Activated T-helper 1 cell treated with anti-CD3 and anti-CD28 coated beads, Interleukin-12 subunit alpha, Interleukin-12 subunit beta, Interleukin-2, Interleukin-4 antibody, amounts not matched to agents 30 ng/mL and 10 ng/mL and 1 ng/mL, durations not matched to agents 14 hours and 24 hours and 36 hours (primary cell): ENCODE measurements at regions of chr1 and their contacts with region 1.

Region 1: DNA sequence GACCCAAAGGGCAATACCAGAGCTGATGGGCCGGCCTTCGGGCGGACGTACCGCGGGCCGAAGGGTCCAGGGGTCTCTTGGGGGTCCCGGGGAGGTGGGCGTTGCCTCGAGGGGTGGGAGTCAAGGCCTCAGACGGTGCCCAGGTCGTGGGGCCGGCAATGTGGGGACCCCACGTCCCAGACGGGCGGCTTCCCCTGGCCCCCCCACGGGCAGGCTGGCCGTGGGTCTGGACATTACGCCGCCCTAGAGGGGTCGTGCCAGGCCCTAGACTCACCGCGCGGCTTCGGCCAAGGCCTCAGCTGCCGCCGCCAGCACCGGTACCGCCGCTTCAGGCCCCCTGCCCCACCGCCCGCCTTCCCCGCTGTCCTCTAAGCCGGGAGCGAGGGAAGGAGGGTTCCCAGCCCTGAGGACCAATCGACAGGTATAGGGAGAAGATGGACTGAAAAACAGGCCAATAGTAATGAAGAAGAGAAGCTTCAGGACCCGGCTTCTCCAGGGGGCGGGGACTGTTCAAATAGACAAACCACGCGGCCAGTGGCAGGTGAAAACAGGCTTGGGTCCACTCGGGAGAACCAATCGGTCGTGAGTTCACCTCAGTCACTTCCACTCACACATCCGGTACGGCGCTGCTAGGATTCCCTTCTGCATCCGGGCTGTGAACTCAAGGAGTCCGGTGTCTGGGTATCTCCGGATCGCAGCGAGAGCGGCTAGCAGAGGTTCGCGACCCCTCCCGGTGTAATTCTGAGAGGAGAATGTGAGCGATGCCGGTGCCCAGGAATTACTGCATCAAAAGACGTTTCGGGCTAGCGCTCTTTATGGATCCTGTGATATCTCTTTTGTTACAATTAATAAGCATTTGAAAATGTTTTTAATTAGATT is at the start of gene MTOR:
- DNase-seq: peak; percentile 97
- H3K4me3 Mint-ChIP-seq: peak within 1 kb of the TSS; percentile 97
- H3K27ac Mint-ChIP-seq: peak within 1 kb of the TSS; percentile 82
- H3K4me1 Mint-ChIP-seq: peaks cover 11% of the 10 kb centered on the region
- H3K27me3 Mint-ChIP-seq: peaks cover 3% of the 10 kb centered on the region
- total RNA-seq, gene MTOR: 48.7 and 49.4 TPM in 2 replicates

Region 2: DNA sequence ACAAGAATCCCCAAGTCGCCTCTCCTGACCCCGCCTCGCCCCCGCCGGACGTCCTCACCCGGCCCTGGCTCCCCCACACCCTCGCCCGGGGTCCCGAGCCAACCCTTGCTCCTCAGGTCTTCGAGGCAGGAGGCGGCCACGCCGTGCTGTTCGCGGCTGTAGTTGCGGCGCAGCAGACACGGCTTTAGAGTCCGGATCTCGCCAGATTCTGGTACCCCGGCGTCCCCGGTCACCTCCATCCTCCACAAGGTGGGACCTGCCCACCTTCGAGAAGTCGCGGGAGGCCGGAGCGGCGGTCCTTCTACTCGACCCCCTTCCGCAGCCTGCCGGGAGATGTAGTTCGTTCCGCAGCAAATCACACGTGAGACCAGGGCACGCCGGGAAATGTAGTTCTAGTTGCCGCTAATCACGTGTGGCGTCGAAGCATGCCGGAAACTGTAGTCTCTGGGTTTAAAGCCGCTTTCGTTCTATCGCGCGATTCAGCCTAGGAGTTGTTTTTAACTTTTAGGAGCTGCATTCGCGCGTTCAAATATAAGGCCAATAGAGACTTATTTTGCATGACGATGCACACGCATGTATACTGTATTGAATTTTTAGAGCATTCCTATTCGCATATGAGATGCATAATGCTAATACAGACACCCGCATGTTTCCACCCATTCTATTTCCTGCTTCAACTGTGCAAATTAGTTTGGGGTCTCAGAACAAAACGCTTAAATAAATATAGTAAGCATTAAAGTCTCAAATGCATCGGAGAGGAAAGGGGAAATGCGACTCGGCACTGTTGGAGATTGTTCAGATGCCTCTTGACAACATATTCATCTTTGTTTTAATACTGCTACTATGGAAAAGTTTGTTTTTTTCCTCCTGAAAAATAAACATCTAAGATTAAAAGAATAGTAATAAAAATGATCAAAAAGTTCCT is 789.9 kb before region 1 on chr1 and contains the start of gene DFFA:
- intact Hi-C with region 1: loop called (anchors 1 kb)
- DNase-seq: peak; percentile 90
- H3K4me3 Mint-ChIP-seq: peak within 1 kb of the TSS; percentile 89
- H3K27ac Mint-ChIP-seq: peak within 1 kb of the TSS; percentile 85
- H3K4me1 Mint-ChIP-seq: peaks cover 45% of the 10 kb centered on the region
- H3K27me3 Mint-ChIP-seq: no peaks in the 10 kb centered on the region
- total RNA-seq, gene DFFA: 54.7 and 60.1 TPM in 2 replicates

Region 3: DNA sequence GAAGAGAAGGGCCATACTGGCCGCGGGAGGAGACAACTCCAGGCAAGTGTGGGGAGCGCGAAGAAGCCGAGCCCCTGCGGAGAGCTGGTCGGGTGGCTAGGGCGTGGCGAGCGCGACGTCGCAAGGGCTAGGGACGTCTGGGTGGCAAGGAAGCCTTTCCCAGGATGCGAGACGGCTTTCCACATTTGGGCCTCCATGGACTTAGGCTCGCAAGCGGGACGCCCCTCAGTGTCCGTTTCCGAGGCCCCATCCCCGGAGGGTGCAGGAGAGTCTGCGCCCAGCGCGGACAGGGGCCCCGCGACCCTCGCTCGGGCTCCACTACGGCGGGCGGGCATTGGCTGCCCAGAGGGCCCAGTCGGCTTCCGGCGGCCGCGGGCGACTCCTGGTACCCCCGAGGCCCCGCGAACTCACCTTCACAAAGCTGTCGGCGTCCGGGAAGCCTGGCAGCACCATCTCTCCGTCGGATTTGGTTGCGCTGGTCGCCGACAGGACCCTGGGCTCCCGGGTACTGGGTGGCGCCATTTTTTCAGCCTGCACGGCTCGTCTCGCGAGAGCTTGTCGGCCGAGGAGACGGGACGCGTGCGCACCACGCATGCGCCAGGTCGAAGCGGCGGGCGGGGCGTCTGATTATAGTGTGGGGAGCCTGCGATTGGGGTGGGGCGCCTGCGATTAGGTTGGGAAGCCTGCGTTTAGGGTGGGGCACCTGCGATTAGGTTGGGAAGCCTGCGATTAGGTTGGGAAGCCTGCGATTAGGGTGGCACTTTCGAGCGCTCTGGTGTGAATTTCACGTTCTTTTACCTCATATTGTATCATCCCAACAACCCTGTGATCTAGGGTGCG is 162.9 kb before region 1 on chr1 and contains the start of gene EXOSC10:
- intact Hi-C with region 1: loop called (anchors 1 kb)
- DNase-seq: peak; percentile 96
- H3K4me3 Mint-ChIP-seq: peak within 1 kb of the TSS; percentile 96
- H3K27ac Mint-ChIP-seq: peak within 1 kb of the TSS; percentile 96
- H3K4me1 Mint-ChIP-seq: peaks cover 13% of the 10 kb centered on the region
- H3K27me3 Mint-ChIP-seq: no peaks in the 10 kb centered on the region
- total RNA-seq, gene EXOSC10: 93.5 and 103 TPM in 2 replicates

Region 4: DNA sequence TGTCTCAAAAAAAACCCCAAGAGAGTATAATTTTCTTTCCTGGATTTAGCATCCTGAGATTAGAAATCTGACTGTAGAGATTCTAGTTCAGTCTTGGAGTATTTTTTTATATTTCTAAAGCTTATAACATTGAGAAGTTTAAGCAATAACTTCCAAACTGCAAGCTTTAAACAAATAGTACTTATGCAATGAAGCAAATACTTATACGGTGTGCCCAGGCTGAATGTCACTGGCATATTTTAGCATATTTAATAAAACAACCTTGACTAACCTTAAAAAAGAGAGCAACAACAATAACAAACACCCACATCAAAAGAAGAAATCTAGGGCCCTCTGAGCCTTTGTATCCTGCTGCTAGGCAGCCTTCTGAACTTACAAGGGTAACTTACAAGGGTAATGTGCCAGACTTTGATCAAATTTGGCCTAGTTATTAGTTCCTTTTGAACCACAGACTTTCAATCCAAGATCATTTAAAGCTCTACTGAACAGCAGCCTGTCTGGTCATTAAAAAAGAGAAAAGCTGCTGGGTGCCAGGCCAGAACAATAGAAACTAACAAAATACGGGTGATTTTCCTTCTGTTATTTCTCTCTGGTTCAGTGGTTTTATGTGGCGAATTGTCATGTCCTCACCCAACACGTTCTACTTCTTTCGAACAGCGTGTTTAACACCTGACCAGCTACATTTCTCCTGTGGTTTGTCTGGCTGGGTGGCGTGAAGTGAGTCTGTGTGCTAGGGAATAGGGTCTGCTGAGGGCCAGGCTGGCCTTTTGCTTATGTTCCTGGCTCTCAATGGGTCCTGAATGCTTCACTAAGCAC is 16.3 kb before region 1 on chr1:
- intact Hi-C with region 1: loop called (anchors 1 kb)
- DNase-seq: no peak
- H3K4me3 Mint-ChIP-seq: no peak overlapping the region
- H3K27ac Mint-ChIP-seq: no peak overlapping the region
- H3K4me1 Mint-ChIP-seq: no peaks in the 10 kb centered on the region
- H3K27me3 Mint-ChIP-seq: no peaks in the 10 kb centered on the region

Region 5: GRCh38 chr1:11272832-11273594 is 10.6 kb after region 1 on chr1 and contains the start of gene UBIAD1:
- intact Hi-C with region 1: loop called (anchors 1 kb)
- DNase-seq: peak; percentile 75
- H3K4me3 Mint-ChIP-seq: peak within 1 kb of the TSS; percentile 98
- H3K27ac Mint-ChIP-seq: peak within 1 kb of the TSS; percentile 95
- H3K4me1 Mint-ChIP-seq: peaks cover 25% of the 10 kb centered on the region
- H3K27me3 Mint-ChIP-seq: peaks cover 2% of the 10 kb centered on the region
- total RNA-seq, gene UBIAD1: 30.5 and 33.1 TPM in 2 replicates

Region 6: DNA sequence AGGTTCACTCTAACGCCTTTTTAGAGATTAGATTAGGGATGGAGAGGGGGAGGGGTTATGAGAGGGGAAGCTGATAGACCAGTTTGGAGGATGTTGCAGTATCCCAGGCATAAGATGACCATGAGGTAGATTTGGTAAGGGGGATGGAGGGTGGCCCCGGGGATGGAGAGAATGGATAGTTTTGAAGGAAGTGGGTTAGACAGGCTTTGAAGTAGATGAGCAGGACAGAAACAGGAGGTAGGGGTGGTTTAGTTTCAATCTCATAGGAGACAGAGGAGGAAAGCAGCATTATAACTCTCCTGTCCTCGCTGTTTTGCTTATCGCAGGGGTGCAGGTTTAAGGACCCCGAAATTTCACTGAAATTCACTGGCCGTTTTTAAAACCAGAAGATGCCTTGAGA is 22.4 kb after region 1 on chr1:
- intact Hi-C with region 1: no loop called
- DNase-seq: no peak
- H3K4me3 Mint-ChIP-seq: peak overlapping the region; percentile 5
- H3K27ac Mint-ChIP-seq: peak overlapping the region; percentile 73
- H3K4me1 Mint-ChIP-seq: peaks cover 59% of the 10 kb centered on the region
- H3K27me3 Mint-ChIP-seq: no peaks in the 10 kb centered on the region

Region 7: DNA sequence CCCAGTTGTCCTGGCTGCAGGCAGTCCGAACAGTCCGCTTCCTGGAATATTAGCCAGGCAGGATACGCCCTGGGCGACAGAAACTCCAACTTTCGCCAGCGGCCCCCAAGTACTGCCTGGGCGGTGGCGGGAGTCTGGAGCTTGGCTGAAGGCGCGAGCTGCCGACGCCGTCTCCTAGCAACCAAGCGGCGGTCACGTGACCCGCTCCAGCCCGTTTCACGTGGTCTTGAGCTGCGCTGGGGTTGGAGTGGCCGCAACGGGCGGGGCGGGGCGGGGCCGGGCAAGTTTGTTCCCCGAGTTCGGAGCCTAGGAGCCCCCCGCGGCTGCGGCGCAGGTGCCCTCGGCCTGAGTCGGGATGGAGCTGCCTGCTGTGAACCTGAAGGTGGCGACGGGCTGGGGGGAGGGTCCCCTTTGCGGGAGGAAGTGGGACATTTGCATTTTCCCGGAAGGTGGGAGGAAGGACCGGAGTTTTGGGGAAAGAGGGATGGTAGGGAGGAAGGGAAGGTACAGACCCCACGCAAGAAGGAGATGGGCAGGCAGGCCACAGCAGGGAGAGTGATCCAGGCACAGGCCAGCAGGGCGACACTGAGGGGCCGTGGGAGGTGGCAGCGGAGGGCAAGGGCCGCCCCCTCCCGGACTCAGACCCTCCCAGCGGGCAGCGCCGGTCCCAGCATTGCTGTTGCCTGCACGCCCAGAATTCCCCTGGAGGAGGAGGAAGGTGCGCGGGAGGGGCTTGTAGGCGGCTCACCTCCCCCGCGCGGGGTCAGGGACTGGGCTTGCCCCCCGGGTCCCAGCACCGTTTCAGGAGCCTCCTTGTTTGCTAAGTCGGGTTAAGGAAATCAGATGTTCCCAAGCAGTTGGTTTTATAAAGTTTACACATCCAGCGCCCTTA is 473.7 kb after region 1 on chr1 and contains the start of gene AGTRAP:
- intact Hi-C with region 1: loop called (anchors 5 kb)
- DNase-seq: peak; percentile 84
- H3K4me3 Mint-ChIP-seq: peak within 1 kb of the TSS; percentile 96
- H3K27ac Mint-ChIP-seq: peak within 1 kb of the TSS; percentile 88
- H3K4me1 Mint-ChIP-seq: peaks cover 67% of the 10 kb centered on the region
- H3K27me3 Mint-ChIP-seq: no peaks in the 10 kb centered on the region
- total RNA-seq, gene AGTRAP: 13.8 and 15.9 TPM in 2 replicates